ENCODE measurements at regions of chr9 and their contacts with region 1.

Region 1: GRCh38 chr9:134339183-134339806 is 13.0 kb downstream of the RXRA start:
- DNase-seq: no peak
- H3K4me3 ChIP-seq: no peak overlapping the region
- H3K27ac ChIP-seq: no peak overlapping the region
- H3K4me1 ChIP-seq: peaks cover 22% of the 10 kb centered on the region
- H3K27me3 ChIP-seq: no peaks in the 10 kb centered on the region
- CTCF ChIP-seq: no peak

Region 2: DNA sequence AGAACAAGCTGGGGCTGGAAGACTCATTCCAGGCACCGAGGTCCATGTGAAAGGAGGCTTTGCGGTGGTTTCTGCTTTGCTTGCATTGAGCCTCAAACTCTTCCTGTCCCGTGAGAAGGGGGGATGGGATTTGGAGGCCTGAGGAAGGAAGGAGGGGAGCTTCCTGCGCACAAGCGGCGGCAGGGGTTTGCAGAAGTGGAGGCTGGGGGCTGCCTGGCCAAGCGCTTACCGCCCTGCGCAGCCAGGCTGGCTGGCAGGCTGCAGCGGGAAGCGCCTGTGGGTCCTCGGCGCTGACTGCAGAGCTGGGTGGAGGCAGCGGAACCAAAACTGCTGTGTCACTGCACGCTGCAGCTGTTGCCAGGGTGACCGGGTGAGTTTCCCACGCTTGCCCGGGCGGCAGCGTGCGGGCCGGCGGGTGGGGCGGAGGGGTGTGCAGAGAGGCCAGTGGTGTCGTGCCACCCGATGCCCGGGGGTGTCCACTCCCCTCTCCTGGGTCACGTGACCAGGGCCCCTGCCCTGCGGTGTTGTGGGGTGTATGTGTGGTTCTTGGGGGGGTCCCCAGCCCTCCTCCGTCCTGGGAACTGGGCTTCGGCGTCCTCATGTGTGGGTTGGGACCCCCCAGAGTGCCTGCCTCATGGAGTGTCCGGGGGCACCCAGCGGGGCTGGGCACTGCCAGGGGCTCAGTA is 68.0 kb after region 1 on chr9:
- CTCF ChIA-PET with region 1: no interaction called
- dilution Hi-C with region 1: loop called (anchors 10 kb)
- in situ Hi-C with region 1: no loop called
- intact Hi-C with region 1: no loop called
- DNase-seq: peak; percentile 90
- H3K4me3 ChIP-seq: peak overlapping the region in 2 of 3 experiments; percentile 1 to 34
- H3K27ac ChIP-seq: peak overlapping the region; percentile 88
- H3K4me1 ChIP-seq: peaks cover 38% of the 10 kb centered on the region
- H3K27me3 ChIP-seq: no peaks in the 10 kb centered on the region
- CTCF ChIP-seq: no peak

Measured in mammary epithelial cell (primary cell).